ENCODE measurements at regions of chr1 and their contacts with region 1.

Region 1: GRCh38 chr1:37822906-37823815 is 15.2 kb upstream of the YRDC start:
- DNase-seq: no peak
- H3K4me3 ChIP-seq: no peak overlapping the region
- CTCF ChIP-seq: no peak

Region 2: GRCh38 chr1:37274938-37275631 is 548.1 kb before region 1 on chr1:
- CTCF ChIA-PET with region 1: no interaction called
- POLR2A ChIA-PET with region 1: no interaction called
- DNase-seq: no peak
- H3K4me3 ChIP-seq: no peak overlapping the region
- CTCF ChIP-seq: no peak

Region 3: DNA sequence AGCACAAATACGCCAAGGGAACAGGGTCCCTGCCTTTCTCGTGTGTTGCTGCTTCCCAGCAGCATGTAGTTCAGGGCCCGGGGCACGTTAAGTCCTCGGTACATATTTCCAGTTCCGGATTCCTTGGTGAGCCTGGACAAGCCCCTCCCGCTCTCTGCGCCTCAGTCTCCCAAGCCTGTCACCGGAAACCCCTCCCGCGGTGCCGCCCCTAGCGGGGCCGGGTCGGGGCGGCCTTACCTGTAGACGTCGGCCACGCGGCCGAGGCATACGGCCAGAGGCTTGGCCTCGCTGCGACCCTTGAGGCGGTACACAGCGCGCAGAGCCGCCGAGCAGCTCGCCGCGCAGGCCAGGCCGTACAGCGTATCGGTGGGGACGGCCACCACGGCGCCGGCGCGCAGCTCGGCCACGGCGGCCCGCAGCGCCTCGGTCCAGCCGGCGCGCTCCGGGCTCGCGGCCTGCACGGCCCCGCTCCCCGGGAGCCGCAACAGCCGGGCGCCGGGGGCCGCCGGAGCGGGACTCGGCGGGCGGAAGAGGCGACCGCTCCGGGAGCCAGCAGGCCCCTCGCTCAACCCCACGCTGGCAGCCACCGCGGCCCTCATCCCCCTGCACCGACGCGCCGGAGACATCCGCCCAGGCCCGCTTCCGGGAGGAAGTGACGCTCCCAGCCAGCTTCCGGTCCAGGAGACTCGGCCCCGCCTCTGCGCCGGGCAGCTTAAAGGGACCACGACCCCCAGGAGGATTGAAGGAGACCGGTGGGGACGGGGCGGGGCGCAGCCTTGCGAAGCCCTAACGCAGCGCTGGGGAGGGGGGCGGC is 15.4 kb before region 1 on chr1 and contains the starts of genes C1orf122 and YRDC:
- CTCF ChIA-PET with region 1: interaction called, 10 read pairs
- POLR2A ChIA-PET with region 1: interaction called, 5 read pairs
- DNase-seq: peak; percentile 53
- H3K4me3 ChIP-seq: peak within 1 kb of the TSS; percentile 84
- CTCF ChIP-seq: no peak

Region 4: DNA sequence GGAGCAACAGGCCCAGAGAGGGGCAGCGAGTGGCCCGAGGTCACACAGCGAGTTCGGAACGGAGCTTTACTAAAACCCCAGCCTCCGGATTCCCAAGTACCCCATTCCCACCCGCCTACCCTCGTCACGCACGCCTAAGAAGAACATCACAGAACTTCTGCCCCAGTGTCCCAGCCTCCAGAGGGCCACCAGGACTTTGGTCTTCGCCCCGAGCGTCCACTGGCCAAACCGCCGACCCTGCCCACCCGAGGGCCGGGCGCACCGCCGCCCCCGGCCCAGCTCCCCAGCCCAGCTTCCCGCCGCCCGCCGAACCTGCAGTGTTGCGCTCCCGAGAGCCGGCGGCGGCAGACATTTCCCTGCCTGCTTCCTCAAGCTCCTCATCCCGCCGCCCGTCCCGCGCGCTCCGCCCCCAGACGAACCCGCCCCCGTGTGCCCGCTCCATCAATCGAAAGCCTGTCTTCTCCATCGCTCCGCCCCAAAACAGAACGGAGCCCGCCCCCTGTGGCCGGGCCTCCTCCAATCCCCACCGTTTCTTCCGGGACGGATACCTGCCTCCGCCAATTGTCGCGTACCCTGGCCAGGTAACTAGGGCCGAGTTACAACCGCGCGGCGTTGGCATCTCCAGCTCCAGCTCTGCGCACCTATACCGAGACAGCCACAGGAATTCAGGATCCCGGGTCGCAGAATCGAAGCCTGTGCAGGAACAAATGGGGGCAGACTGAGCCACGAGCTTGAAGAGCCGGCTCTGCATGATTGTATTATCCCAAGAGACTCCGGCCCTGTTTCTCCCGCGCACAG is 108.4 kb after region 1 on chr1:
- CTCF ChIA-PET with region 1: no interaction called
- POLR2A ChIA-PET with region 1: no interaction called
- DNase-seq: peak; percentile 47
- H3K4me3 ChIP-seq: peak overlapping the region; percentile 66
- CTCF ChIP-seq: no peak